Right ventricle myocardium superior (tissue), 1 donor: ENCODE measurements at regions of chr4 and their contacts with region 1.

Region 1: GRCh38 chr4:140359562-140360427 is 13.7 kb upstream of the SCOC start:
- DNase-seq: peak; percentile 68
- ATAC-seq: peak; percentile 88

Region 2: DNA sequence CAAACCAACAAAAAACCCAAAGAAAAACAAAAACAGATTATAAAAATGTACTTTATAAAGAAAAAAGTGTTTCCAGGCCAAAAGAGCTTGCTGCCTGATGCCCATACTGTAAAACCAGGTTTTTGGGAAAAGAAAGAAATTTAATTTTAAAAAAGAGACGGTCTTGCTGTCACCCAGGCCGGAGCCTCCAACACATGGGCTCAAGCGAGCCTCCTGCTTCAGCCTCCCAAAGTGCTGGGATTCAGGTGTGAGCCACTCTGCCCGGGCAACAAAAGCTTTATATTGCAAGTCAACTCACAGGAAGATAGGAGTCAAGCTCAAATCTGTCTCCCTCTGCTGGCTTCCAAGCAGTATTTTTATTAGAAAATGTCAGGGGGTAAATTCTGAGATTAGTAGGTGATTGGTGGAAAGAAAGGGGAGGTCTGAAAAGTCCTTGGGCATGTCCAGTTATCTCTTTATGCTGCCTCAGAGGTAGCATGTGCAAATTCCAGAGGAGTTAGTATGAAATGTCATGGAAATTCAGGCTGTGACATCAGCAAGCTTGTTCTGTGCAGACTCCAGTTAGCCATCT is 654.8 kb before region 1 on chr4:
- intact Hi-C with region 1: no loop called
- DNase-seq: no peak
- ATAC-seq: no peak

Region 3: DNA sequence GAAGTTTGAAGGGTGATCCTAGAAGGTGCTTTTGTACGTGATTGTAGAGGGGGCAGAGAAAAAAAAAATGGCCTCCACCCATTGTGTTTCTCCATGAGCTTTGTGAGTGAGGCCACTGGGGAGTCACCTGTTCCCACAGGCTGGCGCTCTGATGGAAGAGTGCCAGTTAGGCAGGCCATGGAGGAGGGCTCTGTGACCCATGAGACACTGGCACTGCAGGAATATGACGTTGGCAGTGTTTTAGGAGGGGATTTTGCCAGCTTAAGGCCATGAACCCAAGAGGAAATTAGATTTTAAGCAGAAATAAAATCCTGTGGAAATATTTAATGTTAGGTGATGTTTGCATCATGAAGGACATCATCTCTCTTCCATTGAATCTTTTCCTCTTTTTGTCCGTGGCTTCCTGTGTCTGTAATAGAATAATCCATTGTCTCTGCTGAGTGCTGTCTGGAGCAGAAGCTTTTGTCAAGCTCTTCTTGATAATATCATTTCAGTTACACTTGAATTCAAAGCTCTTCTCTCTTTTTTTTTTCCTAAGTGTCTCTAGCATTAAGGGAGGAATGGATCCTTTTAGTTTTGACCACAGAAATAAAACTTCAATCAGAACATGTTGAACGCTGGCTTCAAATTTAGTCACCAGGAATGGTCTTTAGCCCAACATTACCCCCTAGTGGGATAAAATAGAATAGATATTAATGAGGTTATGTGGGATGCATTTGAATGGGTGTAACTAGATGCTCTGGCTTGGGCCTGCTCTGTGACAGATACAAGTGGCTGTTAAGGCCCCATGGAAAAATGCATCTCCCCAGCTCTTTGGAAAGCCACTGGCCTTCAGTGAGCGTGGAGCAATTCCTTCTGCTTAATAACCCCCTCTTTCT is 250.0 kb after region 1 on chr4:
- intact Hi-C with region 1: loop called (anchors 5 kb)
- DNase-seq: no peak
- ATAC-seq: peak; percentile 81

Region 4: DNA sequence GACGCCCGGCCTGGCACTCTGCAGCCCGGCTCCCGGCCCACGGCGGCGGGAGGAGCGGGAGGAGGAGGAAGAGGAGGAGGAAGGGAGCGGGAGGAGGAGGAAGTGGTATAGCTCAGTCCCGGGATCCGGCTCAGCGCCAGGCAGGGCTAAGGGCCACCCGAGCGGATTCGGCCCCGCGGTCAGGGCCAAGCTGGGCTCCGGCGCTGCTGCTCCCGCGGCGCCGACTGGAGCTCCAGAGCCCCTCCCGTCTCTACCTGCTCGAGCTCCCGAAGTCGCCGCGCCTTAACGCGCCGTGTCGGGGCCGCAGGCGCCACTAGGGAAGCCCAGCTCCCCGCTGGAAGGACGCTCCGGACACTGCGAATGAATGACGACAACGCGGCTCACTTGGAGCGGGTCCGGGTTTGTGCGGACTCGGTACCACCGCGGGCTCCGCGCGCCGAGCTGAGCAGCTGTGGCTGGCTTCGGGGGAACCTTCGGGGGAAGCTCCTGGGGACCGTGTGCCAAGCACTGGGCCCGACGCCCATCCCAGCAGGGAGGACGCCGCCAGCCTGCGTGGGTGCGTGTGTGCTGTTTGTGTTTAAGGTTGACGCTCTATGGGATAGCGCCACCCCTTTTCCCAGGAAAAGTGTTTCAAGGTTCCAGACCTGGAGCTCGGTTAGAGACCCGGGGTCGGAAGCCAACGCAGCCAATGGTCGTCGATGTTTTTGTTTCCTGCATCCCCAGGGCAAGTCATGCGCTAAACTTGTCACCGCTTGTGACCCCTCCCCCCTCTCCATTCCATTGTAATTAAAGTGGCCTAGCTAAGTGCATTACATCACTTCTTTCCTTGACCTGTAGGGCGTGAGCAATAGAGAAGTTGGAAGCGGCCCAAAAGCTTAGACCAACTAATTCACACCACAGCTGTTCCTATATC is 396.8 kb after region 1 on chr4 and contains the start of gene TBC1D9:
- intact Hi-C with region 1: no loop called
- DNase-seq: peak; percentile 89
- ATAC-seq: peak; percentile 87
- total RNA-seq, gene TBC1D9: 10.0 TPM